IMR-90 (cell line): ENCODE measurements at regions of chr1 and their contacts with region 1.

Region 1: GRCh38 chr1:205335643-205336091 is 14.1 kb upstream of the NUAK2 start:
- DNase-seq: peak; percentile 62
- ATAC-seq: peak; percentile 95
- H3K4me3 ChIP-seq: no peak overlapping the region
- H3K27ac ChIP-seq: no peak overlapping the region
- H3K4me1 ChIP-seq: no peaks in the 10 kb centered on the region
- H3K27me3 ChIP-seq: peaks cover 69% of the 10 kb centered on the region
- CTCF ChIP-seq: peak; percentile 99
- POLR2A ChIP-seq: no peak
- RAD21 ChIP-seq: peak; percentile 90

Region 2: DNA sequence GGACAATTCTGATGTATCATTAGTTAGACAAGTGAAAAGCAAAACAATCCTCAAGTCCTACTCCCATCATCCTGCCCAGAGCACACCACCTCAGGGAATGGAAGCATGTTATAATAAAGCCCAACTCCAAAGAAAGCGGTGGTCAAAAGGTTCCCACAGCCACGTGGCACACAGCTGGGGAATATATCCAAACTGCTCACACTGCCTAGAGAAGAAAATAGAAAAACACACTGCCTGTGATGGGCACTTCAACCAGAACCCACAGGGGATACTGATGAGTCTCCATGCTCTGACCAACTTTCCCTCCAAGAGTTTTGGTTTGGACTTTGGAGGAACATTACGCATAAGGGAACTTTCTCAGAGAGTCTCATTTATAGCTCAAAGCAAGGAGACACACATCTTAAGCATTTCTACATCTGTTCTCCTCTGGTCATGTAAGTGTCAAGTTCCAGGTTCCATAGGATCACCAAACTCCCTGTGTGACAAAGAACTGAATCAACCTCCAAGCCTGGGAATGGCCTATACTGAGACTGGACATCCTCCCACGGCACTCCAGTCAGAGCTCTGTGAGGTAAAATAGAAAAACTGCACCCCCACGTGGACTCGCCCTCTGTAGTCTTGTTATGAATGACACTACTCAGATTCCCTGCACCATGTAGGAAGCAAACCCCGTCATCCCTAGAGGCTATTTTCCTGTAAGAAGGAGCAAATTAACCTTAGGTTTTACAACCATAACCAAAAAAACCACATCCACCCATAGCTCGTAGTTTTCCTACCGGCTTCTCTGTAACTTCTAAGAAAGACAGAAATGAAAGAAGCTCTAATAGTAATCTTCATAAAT is 136.4 kb before region 1 on chr1:
- CTCF ChIA-PET with region 1: no interaction called
- POLR2A ChIA-PET with region 1: no interaction called
- dilution Hi-C with region 1: no loop called
- in situ Hi-C with region 1: no loop called
- intact Hi-C with region 1: no loop called
- DNase-seq: peak; percentile 70
- ATAC-seq: peak; percentile 24; the same call in 1 of the 2 replicates
- H3K4me3 ChIP-seq: no peak overlapping the region
- H3K27ac ChIP-seq: no peak overlapping the region
- H3K4me1 ChIP-seq: peaks cover 14% of the 10 kb centered on the region
- H3K27me3 ChIP-seq: no peaks in the 10 kb centered on the region
- CTCF ChIP-seq: no peak
- POLR2A ChIP-seq: no peak
- RAD21 ChIP-seq: no peak

Region 3: DNA sequence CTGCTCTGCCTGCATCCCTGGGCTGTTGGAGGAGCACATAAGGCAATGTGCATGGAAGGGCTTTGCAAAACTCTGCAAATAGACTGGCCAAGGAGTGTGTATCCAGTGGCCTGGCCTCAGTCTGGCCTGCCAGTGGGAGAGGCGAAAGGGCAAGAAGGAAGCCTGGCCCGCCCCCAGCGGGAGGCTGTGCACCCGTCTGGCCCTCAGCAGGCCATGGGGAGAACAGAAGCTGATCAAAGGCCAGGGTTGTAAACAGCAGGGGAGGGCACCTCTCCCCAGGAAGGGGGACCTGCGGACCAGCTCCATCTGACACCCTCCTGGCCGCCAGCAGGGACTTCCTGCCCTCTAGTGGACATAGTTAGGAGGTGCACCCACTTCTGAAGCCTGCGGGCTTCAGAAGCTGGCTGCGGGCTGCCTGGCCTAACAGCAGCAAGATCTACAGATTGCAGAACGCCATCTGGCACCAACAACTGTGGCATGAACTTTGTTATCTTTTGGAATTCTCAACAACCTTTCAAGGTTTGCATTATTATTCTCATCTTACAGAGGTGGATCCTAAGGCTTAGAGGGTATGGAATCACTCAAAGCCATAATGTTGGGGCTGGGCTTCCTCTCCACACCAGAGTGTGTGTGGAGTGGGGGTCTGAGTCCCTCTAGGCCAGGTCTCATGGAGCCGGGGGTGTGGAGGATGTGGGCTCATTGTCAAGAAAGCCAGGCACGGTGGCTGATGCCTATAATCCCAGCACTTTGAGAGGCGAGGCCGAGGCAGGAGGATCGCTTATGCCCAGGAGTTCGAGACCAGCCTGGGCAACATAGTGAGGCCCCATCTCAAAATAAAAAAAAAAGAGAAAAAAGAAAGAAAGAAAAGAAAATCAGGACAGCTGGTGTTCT is 149.9 kb after region 1 on chr1:
- CTCF ChIA-PET with region 1: interaction called, 14 read pairs
- POLR2A ChIA-PET with region 1: no interaction called
- dilution Hi-C with region 1: no loop called
- in situ Hi-C with region 1: no loop called
- intact Hi-C with region 1: loop called (anchors 1 kb)
- DNase-seq: peak; percentile 59
- ATAC-seq: peak; percentile 95
- H3K4me3 ChIP-seq: no peak overlapping the region
- H3K27ac ChIP-seq: no peak overlapping the region
- H3K4me1 ChIP-seq: no peaks in the 10 kb centered on the region
- H3K27me3 ChIP-seq: peaks cover 46% of the 10 kb centered on the region
- CTCF ChIP-seq: peak; percentile 90
- POLR2A ChIP-seq: no peak
- RAD21 ChIP-seq: peak; percentile 92